Natural killer cell (primary cell): ENCODE measurements at regions of chr13 and their contacts with region 1.

Region 1: GRCh38 chr13:97109841-97110492 is 112.2 kb upstream of the MBNL2 start:
- DNase-seq: peak; percentile 78 to 87
- ATAC-seq: peak; percentile 89 to 99 (median 97)
- H3K4me3 ChIP-seq: no peak overlapping the region
- H3K4me3 Mint-ChIP-seq: no peak overlapping the region
- H3K27ac ChIP-seq: no peak overlapping the region
- H3K27ac Mint-ChIP-seq: peak overlapping the region in 1 of 2 donors; percentile 30
- H3K4me1 ChIP-seq: peaks cover 6% of the 10 kb centered on the region
- H3K4me1 Mint-ChIP-seq: peaks cover 6 to 8% of the 10 kb centered on the region in 2 donors
- H3K27me3 ChIP-seq: no peaks in the 10 kb centered on the region
- H3K27me3 Mint-ChIP-seq: peaks cover 6 to 25% of the 10 kb centered on the region in 2 donors
- CTCF ChIP-seq: peak; percentile 93

Region 2: GRCh38 chr13:97179506-97179905 is 69.5 kb after region 1 on chr13:
- intact Hi-C with region 1: no loop called
- DNase-seq: no peak
- ATAC-seq: no peak
- H3K4me3 ChIP-seq: no peak overlapping the region
- H3K4me3 Mint-ChIP-seq: no peak overlapping the region
- H3K27ac ChIP-seq: no peak overlapping the region
- H3K27ac Mint-ChIP-seq: no peak overlapping the region
- H3K4me1 ChIP-seq: no peaks in the 10 kb centered on the region
- H3K4me1 Mint-ChIP-seq: no peaks in the 10 kb centered on the region
- H3K27me3 ChIP-seq: peaks cover 2% of the 10 kb centered on the region
- H3K27me3 Mint-ChIP-seq: peaks cover 17 to 36% of the 10 kb centered on the region in 2 donors
- CTCF ChIP-seq: no peak

Region 3: DNA sequence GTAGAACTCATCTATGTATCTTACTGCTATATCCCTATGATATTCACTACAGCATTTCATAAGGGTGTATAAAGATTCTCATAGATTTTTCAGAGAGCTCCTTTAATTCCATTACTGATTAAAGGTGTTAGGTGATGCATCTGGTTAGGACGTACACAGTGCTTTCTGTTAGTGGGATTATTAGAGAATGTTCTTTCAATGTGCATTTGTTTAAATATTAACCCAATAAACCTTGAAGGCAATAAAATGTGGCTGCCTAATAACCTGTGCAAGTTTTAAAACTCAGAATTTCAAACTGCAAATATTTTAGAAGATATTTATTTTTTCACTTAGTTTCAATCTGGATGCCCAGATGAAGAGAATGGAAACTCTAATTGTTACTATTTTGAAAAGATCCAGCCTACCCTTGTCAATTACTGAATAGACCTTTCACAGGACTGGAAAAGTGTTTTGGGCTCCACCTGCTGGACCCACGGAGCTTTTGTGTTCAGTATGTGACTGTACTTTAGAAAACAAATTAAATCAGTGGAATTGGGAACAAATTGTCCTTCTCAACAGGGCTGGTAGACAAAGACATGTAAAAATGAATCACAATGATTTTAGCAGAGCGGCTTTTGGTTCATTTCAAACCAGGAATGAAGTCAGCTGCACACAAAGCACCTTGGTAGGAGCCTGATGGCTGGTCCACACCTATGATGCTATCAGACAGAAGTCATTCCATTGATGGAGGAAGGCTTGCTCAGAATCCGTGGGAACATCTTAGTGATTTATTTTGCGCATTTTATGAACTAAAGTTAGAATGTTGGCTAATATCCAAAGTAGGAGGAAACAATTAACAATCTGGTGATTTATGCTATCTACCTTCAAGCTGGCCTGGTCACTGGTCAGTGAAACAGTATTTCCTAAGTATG is 234.6 kb after region 1 on chr13:
- intact Hi-C with region 1: loop called (anchors 1 kb)
- DNase-seq: peak in 1 of 2 donors; percentile 66
- ATAC-seq: peak in 2 of 3 donors; percentile 55 to 60
- H3K4me3 ChIP-seq: no peak overlapping the region
- H3K4me3 Mint-ChIP-seq: no peak overlapping the region
- H3K27ac ChIP-seq: no peak overlapping the region
- H3K27ac Mint-ChIP-seq: no peak overlapping the region
- H3K4me1 ChIP-seq: peaks cover 2% of the 10 kb centered on the region
- H3K4me1 Mint-ChIP-seq: no peaks in the 10 kb centered on the region
- H3K27me3 ChIP-seq: no peaks in the 10 kb centered on the region
- H3K27me3 Mint-ChIP-seq: no peaks in the 10 kb centered on the region
- CTCF ChIP-seq: peak; percentile 40